Psoas muscle (tissue), 8 donors: ENCODE measurements at regions of chr5 and their contacts with region 1.

Region 1: GRCh38 chr5:6454628-6455053 is 6.0 kb downstream of the UBE2QL1 start:
- DNase-seq: peak; percentile 36 to 86
- ATAC-seq: peak; percentile 77 to 86 (median 82)
- H3K4me3 ChIP-seq: peak overlapping the region; percentile 39
- H3K27ac ChIP-seq: peak overlapping the region; percentile 91
- H3K4me1 ChIP-seq: peaks cover 65% of the 10 kb centered on the region
- H3K27me3 ChIP-seq: no peaks in the 10 kb centered on the region
- CTCF ChIP-seq: no peak

Region 2: DNA sequence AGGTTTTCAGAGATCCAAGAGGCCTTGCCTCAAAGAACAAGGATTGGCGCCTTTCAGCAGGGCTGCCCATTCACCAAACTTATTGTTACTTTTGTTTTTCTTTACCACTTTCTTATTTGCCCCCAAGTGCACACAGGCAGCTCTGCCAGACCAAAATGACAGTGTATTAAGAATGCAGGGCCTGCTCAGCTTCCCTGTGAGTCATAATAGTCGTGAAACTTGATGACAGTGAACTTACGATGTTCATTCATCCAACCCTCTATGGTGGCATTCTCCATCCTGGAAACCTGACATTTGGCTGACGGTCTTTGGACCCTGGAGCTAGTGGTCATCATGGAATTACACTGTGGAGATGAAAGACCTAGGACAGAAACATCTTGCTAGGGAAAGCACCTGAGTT is 38.3 kb after region 1 on chr5:
- intact Hi-C with region 1: loop called in 1 of 2 experiments (anchors 5 kb)
- DNase-seq: no peak
- ATAC-seq: peak; percentile 52 to 76 (median 74)
- H3K4me3 ChIP-seq: no peak overlapping the region
- H3K27ac ChIP-seq: peak overlapping the region; percentile 11
- H3K4me1 ChIP-seq: peaks cover 37% of the 10 kb centered on the region
- H3K27me3 ChIP-seq: no peaks in the 10 kb centered on the region
- CTCF ChIP-seq: no peak

Region 3: GRCh38 chr5:6504677-6505411 is 50.2 kb after region 1 on chr5:
- intact Hi-C with region 1: loop called in 1 of 2 experiments (anchors 5 kb)
- DNase-seq: no peak
- ATAC-seq: no peak
- H3K4me3 ChIP-seq: no peak overlapping the region
- H3K27ac ChIP-seq: no peak overlapping the region
- H3K4me1 ChIP-seq: no peaks in the 10 kb centered on the region
- H3K27me3 ChIP-seq: no peaks in the 10 kb centered on the region
- CTCF ChIP-seq: no peak

Region 4: GRCh38 chr5:6804766-6805501 is 350.3 kb after region 1 on chr5:
- intact Hi-C with region 1: no loop called
- DNase-seq: no peak
- ATAC-seq: no peak
- H3K4me3 ChIP-seq: no peak overlapping the region
- H3K27ac ChIP-seq: no peak overlapping the region
- H3K4me1 ChIP-seq: no peaks in the 10 kb centered on the region
- H3K27me3 ChIP-seq: no peaks in the 10 kb centered on the region
- CTCF ChIP-seq: no peak